Mammary epithelial cell (primary cell): ENCODE measurements at regions of chr2 and their contacts with region 1.

Region 1: DNA sequence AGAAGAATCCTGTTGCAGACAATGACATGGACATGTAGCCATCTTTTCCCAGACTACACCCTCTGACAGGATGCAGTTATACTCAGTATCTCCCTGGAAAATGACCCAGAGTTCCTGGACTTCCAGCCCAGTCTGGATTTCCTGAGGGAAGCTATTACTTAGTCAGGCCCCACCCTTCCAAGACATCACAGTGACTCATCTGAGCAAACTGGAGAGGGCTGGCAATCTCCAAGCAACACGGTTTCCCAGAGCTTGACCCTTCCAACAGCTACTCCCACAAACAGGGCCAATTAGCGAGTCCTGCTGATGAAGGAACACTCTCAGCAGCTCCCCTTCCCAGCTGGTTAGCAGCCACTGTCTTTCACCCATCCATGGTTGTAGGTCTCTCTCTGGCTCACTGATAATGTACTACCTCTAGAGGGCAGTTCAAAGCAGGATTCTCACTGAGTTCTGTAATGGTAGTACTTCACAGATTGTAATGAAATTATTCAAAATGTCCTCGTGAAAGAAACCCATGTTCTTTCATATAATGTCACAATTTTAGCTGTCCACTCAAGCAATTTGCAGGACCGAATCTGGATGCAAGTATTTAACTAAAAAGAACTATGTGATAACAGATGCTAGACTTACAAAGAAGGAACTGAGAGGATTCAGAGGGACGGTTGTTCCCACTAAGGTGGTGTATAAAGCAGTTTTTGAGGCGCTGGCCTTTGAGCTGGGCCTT is 110.2 kb downstream of the MDH1 start:
- DNase-seq: peak; percentile 88
- H3K4me3 ChIP-seq: no peak overlapping the region
- H3K27ac ChIP-seq: peak overlapping the region; percentile 76
- H3K4me1 ChIP-seq: peaks cover 25% of the 10 kb centered on the region
- H3K27me3 ChIP-seq: no peaks in the 10 kb centered on the region
- CTCF ChIP-seq: peak; percentile 62 to 69

Region 2: GRCh38 chr2:62687628-62688027 is 1011.4 kb before region 1 on chr2:
- CTCF ChIA-PET with region 1: no interaction called
- dilution Hi-C with region 1: no loop called
- in situ Hi-C with region 1: no loop called
- intact Hi-C with region 1: no loop called
- DNase-seq: peak; percentile 55
- H3K4me3 ChIP-seq: no peak overlapping the region
- H3K27ac ChIP-seq: no peak overlapping the region
- H3K4me1 ChIP-seq: no peaks in the 10 kb centered on the region
- H3K27me3 ChIP-seq: no peaks in the 10 kb centered on the region
- CTCF ChIP-seq: no peak

Region 3: DNA sequence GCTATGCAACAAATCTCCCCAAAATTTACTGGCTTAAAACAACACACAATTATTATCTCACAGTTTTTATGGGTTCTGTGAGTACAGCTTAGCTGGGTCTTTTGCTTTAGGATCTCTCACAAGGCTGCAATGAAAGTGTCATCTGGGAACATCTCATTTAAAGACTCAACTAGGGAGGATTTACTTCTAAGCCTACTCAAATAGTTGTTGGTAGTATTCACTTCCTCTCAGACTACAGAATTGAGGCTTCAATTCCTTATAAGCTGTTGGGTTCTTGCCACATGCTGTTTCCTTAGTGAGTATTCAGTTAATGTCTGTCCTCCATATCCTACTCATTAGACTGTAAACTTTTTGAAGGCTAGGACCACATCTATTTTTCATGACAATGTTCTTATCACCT is 37.9 kb before region 1 on chr2:
- CTCF ChIA-PET with region 1: no interaction called
- dilution Hi-C with region 1: no loop called
- in situ Hi-C with region 1: no loop called
- intact Hi-C with region 1: no loop called
- DNase-seq: peak; percentile 67
- H3K4me3 ChIP-seq: no peak overlapping the region
- H3K27ac ChIP-seq: no peak overlapping the region
- H3K4me1 ChIP-seq: peaks cover 11% of the 10 kb centered on the region
- H3K27me3 ChIP-seq: no peaks in the 10 kb centered on the region
- CTCF ChIP-seq: no peak

Region 4: DNA sequence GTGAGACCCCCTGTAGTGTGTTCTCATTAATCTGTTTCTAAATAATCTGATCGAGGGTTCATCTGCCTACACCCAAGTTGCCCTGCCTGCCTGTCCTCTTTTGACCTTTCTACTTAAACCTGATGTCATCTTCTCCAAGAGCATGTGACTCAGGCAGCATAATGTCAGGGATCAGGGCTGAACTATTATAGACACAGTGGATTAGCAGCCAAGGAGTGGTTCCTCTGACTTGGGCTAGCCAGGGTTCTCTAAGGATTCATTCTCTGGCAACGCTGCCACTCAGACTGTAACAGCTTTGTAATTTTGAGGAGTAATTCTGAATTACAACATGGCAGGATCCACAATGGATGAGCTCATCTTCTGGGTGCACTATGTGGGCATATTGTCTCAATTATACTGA is 13.8 kb after region 1 on chr2:
- CTCF ChIA-PET with region 1: interaction called, 11 read pairs
- dilution Hi-C with region 1: no loop called
- in situ Hi-C with region 1: no loop called
- intact Hi-C with region 1: no loop called
- DNase-seq: peak; percentile 12
- H3K4me3 ChIP-seq: no peak overlapping the region
- H3K27ac ChIP-seq: no peak overlapping the region
- H3K4me1 ChIP-seq: no peaks in the 10 kb centered on the region
- H3K27me3 ChIP-seq: no peaks in the 10 kb centered on the region
- CTCF ChIP-seq: no peak

Region 5: DNA sequence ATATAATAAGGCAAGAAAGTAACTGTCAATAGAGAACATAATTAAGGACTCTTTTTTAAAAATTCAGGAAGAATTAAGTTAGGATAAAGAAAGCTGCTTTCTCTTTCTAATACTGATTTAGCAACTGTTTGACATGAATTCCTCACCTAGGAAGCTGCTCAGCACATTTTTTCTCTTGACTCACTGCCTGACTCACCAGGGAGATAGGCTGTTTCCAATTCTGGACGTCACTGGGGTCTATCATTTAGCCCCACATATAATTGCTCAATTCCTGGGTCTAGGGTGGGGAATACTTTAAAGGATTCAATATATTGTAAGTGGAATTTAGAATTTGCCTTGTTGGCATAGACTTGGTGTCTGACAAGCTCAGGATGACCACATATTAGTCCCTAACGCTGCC is 91.9 kb after region 1 on chr2:
- CTCF ChIA-PET with region 1: no interaction called
- dilution Hi-C with region 1: no loop called
- in situ Hi-C with region 1: no loop called
- intact Hi-C with region 1: loop called (anchors 5 kb)
- DNase-seq: peak; percentile 67
- H3K4me3 ChIP-seq: no peak overlapping the region
- H3K27ac ChIP-seq: peak overlapping the region; percentile 35
- H3K4me1 ChIP-seq: peaks cover 37% of the 10 kb centered on the region
- H3K27me3 ChIP-seq: no peaks in the 10 kb centered on the region
- CTCF ChIP-seq: no peak

Region 6: DNA sequence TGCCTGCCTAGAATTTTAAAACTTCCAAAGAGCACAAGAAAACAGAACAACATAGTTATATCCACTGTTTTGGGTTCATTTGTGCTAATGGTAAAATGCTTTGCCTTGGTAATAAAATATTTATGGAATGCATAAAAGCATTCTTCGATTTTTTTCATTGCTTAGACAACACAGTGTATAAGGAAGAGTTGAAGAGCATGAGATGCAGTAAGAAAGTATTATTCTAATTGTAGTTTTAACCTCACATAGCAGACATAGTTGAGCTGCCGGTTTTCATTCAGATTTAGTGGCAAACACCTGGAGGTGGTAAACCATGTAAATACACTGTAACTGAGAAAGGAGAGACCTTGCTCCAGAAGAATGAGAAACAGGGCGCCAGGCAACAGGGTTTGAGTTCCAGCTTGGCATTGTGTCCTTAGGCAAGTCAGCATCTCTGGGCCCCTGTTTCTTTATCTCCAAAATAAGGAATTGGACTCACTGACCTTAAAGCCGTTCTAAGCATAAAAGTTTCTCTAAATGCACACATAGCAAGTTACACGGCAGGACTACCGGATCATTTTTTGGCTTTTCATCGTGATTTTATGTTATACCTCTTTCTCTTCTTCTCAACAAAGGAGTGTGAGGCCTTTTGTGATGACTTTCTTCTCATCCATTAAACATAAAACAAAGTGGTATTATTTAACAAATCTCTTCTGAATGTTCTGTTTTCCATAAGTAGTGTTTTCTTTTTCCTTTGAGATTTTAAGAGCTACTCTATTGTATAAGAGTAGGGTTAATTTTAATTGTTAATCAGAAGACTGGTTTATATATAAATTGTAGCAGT is 150.6 kb after region 1 on chr2:
- CTCF ChIA-PET with region 1: interaction called, 6 read pairs
- dilution Hi-C with region 1: no loop called
- in situ Hi-C with region 1: loop called (anchors 5 to 10 kb)
- intact Hi-C with region 1: no loop called
- DNase-seq: no peak
- H3K4me3 ChIP-seq: no peak overlapping the region
- H3K27ac ChIP-seq: peak overlapping the region; percentile 16
- H3K4me1 ChIP-seq: peaks cover 13% of the 10 kb centered on the region
- H3K27me3 ChIP-seq: no peaks in the 10 kb centered on the region
- CTCF ChIP-seq: no peak

Region 7: DNA sequence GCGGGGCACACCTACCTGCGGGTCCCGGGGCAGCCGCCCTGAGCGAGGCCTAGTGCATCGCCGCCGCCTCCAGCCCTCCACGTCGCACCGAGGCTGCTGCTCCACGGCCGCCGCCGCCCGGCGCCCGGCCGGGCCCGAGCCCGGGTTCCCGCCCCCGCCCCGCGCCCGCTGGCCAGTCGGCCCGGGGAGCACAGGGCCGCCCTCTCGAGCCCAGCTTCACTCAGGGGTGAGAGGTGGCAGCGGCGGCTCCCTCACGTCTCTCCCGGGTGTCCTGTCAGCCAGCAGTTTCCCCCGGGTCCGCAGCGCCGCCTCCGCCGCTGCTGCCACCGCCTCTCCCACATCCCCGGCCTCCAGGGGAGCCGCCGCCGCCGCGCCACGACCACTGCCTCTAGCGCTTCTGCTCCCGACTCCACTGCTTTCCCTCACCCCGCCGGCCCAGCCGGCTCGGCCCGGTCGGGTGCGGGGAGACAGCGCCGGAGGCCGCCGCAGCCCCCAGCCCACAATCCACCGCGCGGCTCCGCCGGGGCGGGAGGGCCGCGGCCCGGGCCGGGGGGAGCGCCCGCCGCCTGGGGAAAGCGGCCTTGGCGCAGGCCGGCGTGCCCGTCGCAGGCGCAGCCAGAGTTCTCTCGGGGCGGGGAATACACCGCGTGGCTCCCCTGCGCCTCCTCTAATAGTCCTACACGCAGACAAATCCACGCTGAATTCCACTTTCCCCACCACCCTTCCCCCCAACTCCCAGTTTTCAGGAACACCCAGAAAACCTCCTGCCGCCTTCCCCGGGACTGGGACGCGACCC is 320.1 kb after region 1 on chr2 and contains the start of gene VPS54:
- CTCF ChIA-PET with region 1: no interaction called
- dilution Hi-C with region 1: no loop called
- in situ Hi-C with region 1: no loop called
- intact Hi-C with region 1: loop called (anchors 10 kb)
- DNase-seq: peak; percentile 49
- H3K4me3 ChIP-seq: peak within 1 kb of the TSS; percentile 63 to 92 (median 63)
- H3K27ac ChIP-seq: peak within 1 kb of the TSS; percentile 88
- H3K4me1 ChIP-seq: peaks cover 10% of the 10 kb centered on the region
- H3K27me3 ChIP-seq: no peaks in the 10 kb centered on the region
- CTCF ChIP-seq: peak in 1 of 2 donors; percentile 0
- total RNA-seq, gene VPS54: 12.3 to 15.3 TPM